ENCODE measurements at regions of chr1 and their contacts with region 1.

Region 1: GRCh38 chr1:201999625-202000238 is 10.7 kb upstream of the ELF3 start:
- DNase-seq: peak; percentile 43
- H3K4me3 ChIP-seq: no peak overlapping the region
- H3K27ac ChIP-seq: no peak overlapping the region
- H3K4me1 ChIP-seq: no peaks in the 10 kb centered on the region
- H3K27me3 ChIP-seq: no peaks in the 10 kb centered on the region
- CTCF ChIP-seq: peak; percentile 78 to 92

Region 2: DNA sequence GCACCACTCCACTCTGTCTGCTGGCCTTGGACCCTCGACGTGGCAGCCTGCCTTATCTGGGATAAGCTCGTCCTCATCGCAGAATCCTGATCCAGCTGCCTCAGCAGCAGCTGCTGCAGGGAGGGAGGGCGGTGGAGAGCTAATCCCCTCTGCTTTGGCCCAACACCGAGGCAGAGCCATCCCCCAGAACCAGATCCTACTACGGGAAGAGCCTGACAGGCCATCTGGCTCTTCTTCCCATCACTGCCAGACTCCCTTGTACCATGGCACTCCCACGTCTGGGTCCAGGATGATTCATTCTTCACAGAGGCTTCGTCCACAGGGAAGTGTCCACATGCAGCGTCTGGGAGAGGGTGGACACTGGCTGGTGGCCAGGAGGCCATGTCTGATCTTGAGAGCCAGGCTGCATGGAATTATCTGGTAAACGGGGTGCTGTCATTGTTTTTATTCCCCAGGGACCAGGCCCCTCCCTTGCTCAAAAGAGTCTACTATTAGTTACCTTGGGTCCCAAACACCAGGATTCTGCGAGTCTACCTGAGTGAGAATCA is 731.1 kb before region 1 on chr1:
- CTCF ChIA-PET with region 1: no interaction called
- dilution Hi-C with region 1: no loop called
- in situ Hi-C with region 1: no loop called
- intact Hi-C with region 1: no loop called
- DNase-seq: peak; percentile 80
- H3K4me3 ChIP-seq: no peak overlapping the region
- H3K27ac ChIP-seq: peak overlapping the region; percentile 94
- H3K4me1 ChIP-seq: peaks cover 42% of the 10 kb centered on the region
- H3K27me3 ChIP-seq: no peaks in the 10 kb centered on the region
- CTCF ChIP-seq: no peak

Region 3: DNA sequence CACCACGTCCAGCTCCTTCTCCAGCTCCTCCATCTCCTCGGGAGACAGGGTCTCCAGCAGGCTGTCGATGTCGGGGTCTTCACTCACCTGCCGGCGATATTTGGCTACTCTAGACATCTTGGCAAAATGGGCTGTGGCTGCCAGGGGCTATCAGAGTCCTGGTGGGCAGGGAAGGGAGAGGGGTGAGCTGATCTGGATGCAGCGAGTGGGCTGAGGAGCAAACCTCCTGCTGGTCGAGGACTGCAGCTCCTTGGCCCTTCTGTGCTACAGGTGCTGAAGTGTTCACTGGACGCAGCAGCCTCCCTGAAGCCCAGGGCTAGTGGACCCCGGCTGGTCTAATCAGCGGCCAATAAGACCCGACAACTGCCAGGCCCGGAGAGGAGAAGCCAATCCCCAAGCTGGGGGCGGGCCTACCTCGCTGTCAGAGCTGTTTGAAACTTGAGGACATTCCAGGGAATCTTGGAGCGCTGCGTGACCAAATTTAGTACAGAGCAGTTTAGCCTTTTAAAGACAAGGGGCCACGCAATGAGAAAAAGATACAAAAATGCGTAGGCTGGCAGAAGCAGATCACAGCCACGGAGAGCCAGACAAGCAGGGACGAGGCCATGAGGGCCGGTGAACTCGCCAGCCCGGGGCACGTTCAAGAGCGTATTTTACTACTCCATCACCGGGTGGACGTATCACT is 53.4 kb before region 1 on chr1 and contains the start of gene LMOD1:
- CTCF ChIA-PET with region 1: no interaction called
- dilution Hi-C with region 1: loop called (anchors 5 kb)
- in situ Hi-C with region 1: no loop called
- intact Hi-C with region 1: no loop called
- DNase-seq: peak; percentile 57
- H3K4me3 ChIP-seq: peak within 1 kb of the TSS in 2 of 3 experiments; percentile 5 to 34
- H3K27ac ChIP-seq: no peak within 1 kb of the TSS
- H3K4me1 ChIP-seq: peaks cover 15% of the 10 kb centered on the region
- H3K27me3 ChIP-seq: no peaks in the 10 kb centered on the region
- CTCF ChIP-seq: no peak
- total RNA-seq, gene LMOD1: 29.5 TPM in 1 of 2 donors, not detected in the other

Region 4: GRCh38 chr1:202018468-202019255 is 18.9 kb after region 1 on chr1:
- CTCF ChIA-PET with region 1: no interaction called
- dilution Hi-C with region 1: no loop called
- in situ Hi-C with region 1: no loop called
- intact Hi-C with region 1: no loop called
- DNase-seq: peak; percentile 84
- H3K4me3 ChIP-seq: no peak overlapping the region
- H3K27ac ChIP-seq: peak overlapping the region; percentile 22
- H3K4me1 ChIP-seq: peaks cover 44% of the 10 kb centered on the region
- H3K27me3 ChIP-seq: no peaks in the 10 kb centered on the region
- CTCF ChIP-seq: no peak

Region 5: DNA sequence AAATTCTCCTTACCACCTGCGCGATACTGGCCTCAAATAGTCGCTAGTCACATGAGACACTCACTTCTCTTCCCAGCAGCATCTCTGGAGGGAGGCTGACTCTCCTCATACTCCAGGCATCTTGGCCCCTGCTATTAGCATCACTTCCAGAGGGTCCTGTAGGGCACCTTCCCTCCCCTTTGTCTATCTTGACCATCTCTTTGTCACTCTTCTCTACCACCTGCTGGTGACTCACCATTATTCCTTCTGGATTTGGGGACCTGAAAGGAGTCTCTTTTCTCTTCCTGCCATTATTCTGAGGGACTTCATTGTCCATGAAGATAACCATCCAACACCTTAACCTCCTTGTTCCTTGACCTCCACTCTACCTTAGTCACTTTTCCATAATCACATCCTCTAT is 91.3 kb after region 1 on chr1:
- CTCF ChIA-PET with region 1: interaction called, 4 read pairs
- dilution Hi-C with region 1: loop called (anchors 5 kb)
- in situ Hi-C with region 1: no loop called
- intact Hi-C with region 1: no loop called
- DNase-seq: no peak
- H3K4me3 ChIP-seq: no peak overlapping the region
- H3K27ac ChIP-seq: no peak overlapping the region
- H3K4me1 ChIP-seq: no peaks in the 10 kb centered on the region
- H3K27me3 ChIP-seq: no peaks in the 10 kb centered on the region
- CTCF ChIP-seq: peak in 1 of 2 donors; percentile 26

Region 6: DNA sequence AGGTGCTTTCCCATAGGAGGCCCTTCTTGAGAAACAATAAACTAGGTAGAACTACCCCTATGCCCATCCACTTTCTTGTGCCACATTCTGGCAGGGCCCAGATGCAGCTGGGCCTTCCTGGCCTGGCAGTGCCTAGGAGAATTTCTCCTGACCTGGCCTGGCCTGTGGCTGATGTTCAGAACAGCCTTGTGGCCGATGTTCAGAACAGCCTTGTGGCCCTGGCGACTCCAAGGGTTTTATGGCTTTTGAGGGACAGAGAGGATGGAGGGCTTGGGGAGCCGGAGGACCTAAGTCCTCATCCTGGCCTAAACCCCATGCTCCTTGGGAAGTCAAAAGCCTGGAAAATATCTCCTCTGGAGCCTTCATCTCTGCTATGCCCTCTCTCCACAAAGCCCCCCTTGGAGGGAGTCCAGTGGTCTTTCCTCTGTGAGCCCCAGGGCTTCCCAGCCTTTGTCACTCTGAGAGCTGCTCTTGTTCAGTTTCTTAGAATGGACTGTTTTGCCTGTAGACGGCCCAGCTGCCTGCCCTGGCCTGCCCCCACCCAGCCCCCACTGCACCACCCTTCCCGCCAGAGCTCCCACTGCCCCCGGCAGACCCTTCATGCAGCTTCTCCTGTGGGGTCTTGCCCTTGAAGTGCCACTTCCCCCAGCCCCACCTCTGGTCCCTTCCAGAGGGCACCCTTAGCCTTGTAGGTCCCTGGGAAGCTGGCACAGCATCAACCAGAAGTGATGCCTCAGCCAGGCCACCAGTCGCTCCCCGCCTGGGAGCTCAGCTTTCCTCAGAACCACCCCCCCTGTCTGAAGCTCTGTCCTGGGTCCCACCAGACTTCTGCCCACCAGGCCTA is 129.9 kb after region 1 on chr1:
- CTCF ChIA-PET with region 1: no interaction called
- dilution Hi-C with region 1: loop called (anchors 5 kb)
- in situ Hi-C with region 1: no loop called
- intact Hi-C with region 1: no loop called
- DNase-seq: no peak
- H3K4me3 ChIP-seq: no peak overlapping the region
- H3K27ac ChIP-seq: no peak overlapping the region
- H3K4me1 ChIP-seq: peaks cover 17% of the 10 kb centered on the region
- H3K27me3 ChIP-seq: no peaks in the 10 kb centered on the region
- CTCF ChIP-seq: no peak

Region 7: GRCh38 chr1:202160377-202160940 is 160.7 kb after region 1 on chr1 and contains the start of gene PTPN7:
- CTCF ChIA-PET with region 1: no interaction called
- dilution Hi-C with region 1: no loop called
- in situ Hi-C with region 1: no loop called
- intact Hi-C with region 1: no loop called
- DNase-seq: no peak
- H3K4me3 ChIP-seq: no peak within 1 kb of the TSS
- H3K27ac ChIP-seq: no peak within 1 kb of the TSS
- H3K4me1 ChIP-seq: peaks cover 2% of the 10 kb centered on the region
- H3K27me3 ChIP-seq: no peaks in the 10 kb centered on the region
- CTCF ChIP-seq: no peak
- total RNA-seq, gene PTPN7: not detected